ENCODE measurements at regions of chr3 and their contacts with region 1.

Region 1: DNA sequence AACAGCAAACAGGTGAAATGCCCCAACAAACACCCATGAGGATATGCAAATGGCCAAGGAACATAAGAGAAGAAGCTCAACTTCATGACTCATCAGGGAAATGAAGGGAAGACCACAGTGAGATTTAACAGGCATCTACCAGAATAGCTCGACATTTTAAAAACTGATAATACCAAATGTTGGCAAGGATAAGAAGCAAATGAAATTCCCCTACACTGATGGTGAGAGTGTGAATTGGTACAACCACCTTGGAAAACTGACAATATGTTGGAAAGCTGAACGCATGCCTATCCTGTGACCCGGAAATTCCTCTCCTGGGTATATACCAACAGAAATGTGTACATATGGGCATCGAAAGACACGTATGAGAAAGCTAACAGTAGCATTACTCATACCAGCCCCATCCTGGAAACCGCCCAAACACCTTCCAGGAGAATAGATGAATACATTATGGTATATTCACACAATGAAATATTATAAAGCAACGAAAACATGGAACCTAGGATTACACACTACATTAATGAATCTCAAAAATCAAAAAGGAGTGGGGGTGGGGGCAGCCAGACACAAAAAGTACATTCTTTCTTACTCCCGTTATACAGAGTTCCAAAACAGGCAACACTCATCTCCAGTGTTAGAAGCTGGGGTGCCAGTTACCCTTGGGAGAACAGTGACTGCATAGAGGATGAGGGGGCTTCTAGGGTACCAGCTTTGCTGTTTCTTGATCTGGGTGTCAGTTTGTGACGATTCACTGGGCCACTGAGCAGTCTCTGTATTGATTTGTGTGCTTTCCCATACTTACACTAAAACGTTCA is 16.9 kb downstream of the RFTN1 start:
- DNase-seq: no peak
- ATAC-seq: peak; percentile 40 to 73 (median 58)
- H3K4me3 ChIP-seq: no peak overlapping the region
- H3K4me3 Mint-ChIP-seq: peak overlapping the region in 1 of 3 donors; percentile 31
- H3K27ac ChIP-seq: peak overlapping the region; percentile 10
- H3K27ac Mint-ChIP-seq: peak overlapping the region; percentile 75 to 78
- H3K4me1 ChIP-seq: peaks cover 25 to 45% of the 10 kb centered on the region in 2 experiments
- H3K4me1 Mint-ChIP-seq: peaks cover 59 to 74% (median 72%) of the 10 kb centered on the region in 3 donors
- H3K27me3 ChIP-seq: no peaks in the 10 kb centered on the region
- H3K27me3 Mint-ChIP-seq: no peaks in the 10 kb centered on the region

Region 2: GRCh38 chr3:16092923-16093322 is 403.7 kb before region 1 on chr3:
- CTCF ChIA-PET with region 1: no interaction called
- POLR2A ChIA-PET with region 1: no interaction called
- DNase-seq: no peak
- ATAC-seq: no peak
- H3K4me3 ChIP-seq: no peak overlapping the region
- H3K4me3 Mint-ChIP-seq: no peak overlapping the region
- H3K27ac ChIP-seq: no peak overlapping the region
- H3K27ac Mint-ChIP-seq: no peak overlapping the region
- H3K4me1 ChIP-seq: no peaks in the 10 kb centered on the region
- H3K4me1 Mint-ChIP-seq: no peaks in the 10 kb centered on the region
- H3K27me3 ChIP-seq: peaks cover 0 to 5% of the 10 kb centered on the region in 2 experiments
- H3K27me3 Mint-ChIP-seq: peaks cover 1 to 4% of the 10 kb centered on the region in 2 donors

Region 3: DNA sequence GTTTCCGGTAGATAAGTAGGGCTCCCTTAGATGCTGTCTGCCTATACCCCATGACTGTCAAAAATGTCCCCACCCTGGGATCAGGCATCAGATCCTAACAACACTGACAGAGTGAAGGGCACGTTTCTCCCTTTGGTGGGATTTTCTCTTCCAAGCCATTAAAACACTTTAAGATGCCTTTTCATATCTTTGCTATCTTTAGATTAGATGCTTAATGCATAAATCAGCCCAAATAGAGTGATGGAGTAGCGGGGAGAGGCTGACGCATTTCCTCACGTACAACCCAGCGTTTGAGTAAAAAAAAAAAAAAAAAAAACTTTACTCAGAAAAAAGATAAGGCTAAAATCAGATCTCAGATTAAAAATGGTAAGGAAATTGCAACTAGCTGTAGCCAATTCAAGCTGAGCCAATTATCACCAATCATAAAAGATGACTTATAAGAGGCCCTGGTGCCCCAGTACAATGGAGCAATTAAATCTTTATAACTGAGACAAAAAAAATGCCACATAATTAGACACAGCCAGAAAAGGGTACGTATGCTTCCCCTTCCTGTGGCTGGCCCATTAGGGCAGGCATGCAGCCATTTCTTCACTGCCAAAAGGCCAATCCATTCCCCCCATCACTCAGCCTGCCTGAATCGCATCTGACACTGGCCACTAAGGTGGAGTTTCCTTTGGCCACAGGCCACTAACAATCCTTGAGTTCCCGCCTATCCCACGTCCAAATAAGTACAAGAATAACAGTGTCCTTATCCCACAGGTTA is 28.1 kb before region 1 on chr3:
- CTCF ChIA-PET with region 1: no interaction called
- POLR2A ChIA-PET with region 1: interaction called in 1 of 2 experiments, 11 read pairs
- DNase-seq: peak in 19 of 35 experiments; percentile 6 to 63 (median 22)
- ATAC-seq: peak; percentile 73 to 86 (median 83)
- H3K4me3 ChIP-seq: no peak overlapping the region
- H3K4me3 Mint-ChIP-seq: peak overlapping the region; percentile 53 to 60 (median 59)
- H3K27ac ChIP-seq: peak overlapping the region; percentile 2
- H3K27ac Mint-ChIP-seq: peak overlapping the region; percentile 63 to 88
- H3K4me1 ChIP-seq: peaks cover 24 to 31% of the 10 kb centered on the region in 2 experiments
- H3K4me1 Mint-ChIP-seq: peaks cover 56 to 63% (median 57%) of the 10 kb centered on the region in 3 donors
- H3K27me3 ChIP-seq: no peaks in the 10 kb centered on the region
- H3K27me3 Mint-ChIP-seq: no peaks in the 10 kb centered on the region